Naive thymus-derived CD4-positive, alpha-beta T cell (primary cell): ENCODE measurements at regions of chr12 and their contacts with region 1.

Region 1: GRCh38 chr12:119988782-119989668 is at the start of gene BICDL1:
- DNase-seq: peak; percentile 95 to 99 (median 98)
- ATAC-seq: peak; percentile 93
- H3K4me3 ChIP-seq: peak within 1 kb of the TSS; percentile 68
- H3K4me3 Mint-ChIP-seq: peak within 1 kb of the TSS; percentile 78 to 95 (median 87)
- H3K27ac ChIP-seq: peak within 1 kb of the TSS; percentile 90
- H3K27ac Mint-ChIP-seq: peak within 1 kb of the TSS; percentile 69 to 98 (median 93)
- H3K4me1 ChIP-seq: peaks cover 18 to 19% of the 10 kb centered on the region in 2 donors
- H3K4me1 Mint-ChIP-seq: peaks cover 18 to 46% (median 38%) of the 10 kb centered on the region in 7 donors
- H3K27me3 ChIP-seq: no peaks in the 10 kb centered on the region
- H3K27me3 Mint-ChIP-seq: peaks cover 0 to 9% (median 0%) of the 10 kb centered on the region in 5 donors
- total RNA-seq, gene BICDL1: 75.8 to 156 (median 143) TPM

Region 2: GRCh38 chr12:119667577-119668323 is 321.3 kb before region 1 on chr12 and contains the start of gene PRKAB1:
- CTCF ChIA-PET with region 1: no interaction called
- POLR2A ChIA-PET with region 1: no interaction called
- intact Hi-C with region 1: loop called in 1 of 2 experiments (anchors 2 kb)
- DNase-seq: peak; percentile 91 to 96 (median 93)
- ATAC-seq: peak; percentile 96
- H3K4me3 ChIP-seq: peak within 1 kb of the TSS; percentile 81
- H3K4me3 Mint-ChIP-seq: peak within 1 kb of the TSS; percentile 85 to 98 (median 88)
- H3K27ac ChIP-seq: peak within 1 kb of the TSS; percentile 76
- H3K27ac Mint-ChIP-seq: peak within 1 kb of the TSS; percentile 77 to 96 (median 92)
- H3K4me1 ChIP-seq: peaks cover 20 to 30% of the 10 kb centered on the region in 2 donors
- H3K4me1 Mint-ChIP-seq: peaks cover 27 to 63% (median 55%) of the 10 kb centered on the region in 7 donors
- H3K27me3 ChIP-seq: no peaks in the 10 kb centered on the region
- H3K27me3 Mint-ChIP-seq: no peaks in the 10 kb centered on the region
- total RNA-seq, gene PRKAB1: 23.5 to 48.7 (median 43.3) TPM

Region 3: DNA sequence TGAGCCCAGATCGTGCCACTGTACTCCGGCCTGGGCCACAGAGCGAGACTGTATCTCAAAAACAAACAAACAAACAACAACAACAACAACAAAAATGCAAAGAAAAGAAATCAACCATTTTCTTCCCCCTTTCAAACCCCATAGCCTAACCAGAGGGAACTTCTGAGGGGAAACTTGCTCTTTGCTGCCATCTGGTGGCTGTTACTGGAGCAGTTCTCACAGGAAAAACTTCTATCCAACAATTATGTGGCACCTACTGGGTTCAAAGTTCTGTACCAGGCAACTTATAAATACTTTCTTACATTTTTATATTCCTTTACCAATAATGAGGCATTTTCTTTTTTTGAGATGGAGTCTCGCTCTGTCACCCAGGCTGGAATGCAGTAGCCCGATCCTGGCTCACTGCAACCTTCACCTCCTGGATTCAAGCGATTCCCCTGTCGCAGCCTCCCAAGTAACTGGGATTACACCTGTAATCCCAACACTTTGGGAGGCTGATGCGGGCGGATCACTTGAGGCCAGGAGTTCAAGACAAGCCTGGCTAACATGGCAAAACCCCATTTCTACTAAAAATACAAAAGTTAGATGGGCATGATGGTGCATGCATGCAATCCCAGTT is 50.9 kb before region 1 on chr12:
- CTCF ChIA-PET with region 1: no interaction called
- POLR2A ChIA-PET with region 1: no interaction called
- intact Hi-C with region 1: loop called in 1 of 2 experiments (anchors 1 kb)
- DNase-seq: peak; percentile 28 to 67 (median 51)
- ATAC-seq: peak; percentile 89
- H3K4me3 ChIP-seq: no peak overlapping the region
- H3K4me3 Mint-ChIP-seq: no peak overlapping the region
- H3K27ac ChIP-seq: no peak overlapping the region
- H3K27ac Mint-ChIP-seq: no peak overlapping the region
- H3K4me1 ChIP-seq: no peaks in the 10 kb centered on the region
- H3K4me1 Mint-ChIP-seq: no peaks in the 10 kb centered on the region
- H3K27me3 ChIP-seq: no peaks in the 10 kb centered on the region
- H3K27me3 Mint-ChIP-seq: peaks cover 0 to 7% (median 0%) of the 10 kb centered on the region in 5 donors

Region 4: DNA sequence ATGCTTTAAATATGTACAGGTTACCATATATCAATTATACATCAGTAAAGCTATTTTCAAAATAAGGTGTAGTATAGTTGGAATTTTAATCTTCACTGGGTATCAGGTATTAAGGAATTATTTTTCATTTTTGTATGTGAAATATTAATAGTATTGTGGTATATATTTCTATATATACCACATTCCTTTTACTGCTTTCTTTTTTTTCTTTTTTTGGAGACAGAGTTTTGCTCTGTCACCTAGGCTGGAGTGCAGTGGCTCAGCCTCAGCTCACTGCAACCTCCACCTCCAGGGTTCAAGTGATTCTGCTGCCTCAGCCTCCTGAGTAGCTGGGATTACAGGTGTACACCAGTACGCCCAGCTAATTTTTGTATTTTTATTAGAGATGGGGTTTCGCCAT is 36.6 kb after region 1 on chr12:
- CTCF ChIA-PET with region 1: no interaction called
- POLR2A ChIA-PET with region 1: interaction called, 4 read pairs
- intact Hi-C with region 1: loop called in 1 of 2 experiments (anchors 5 kb)
- DNase-seq: no peak
- ATAC-seq: no peak
- H3K4me3 ChIP-seq: no peak overlapping the region
- H3K4me3 Mint-ChIP-seq: no peak overlapping the region
- H3K27ac ChIP-seq: no peak overlapping the region
- H3K27ac Mint-ChIP-seq: no peak overlapping the region
- H3K4me1 ChIP-seq: no peaks in the 10 kb centered on the region
- H3K4me1 Mint-ChIP-seq: peaks cover 0 to 8% (median 0%) of the 10 kb centered on the region in 7 donors
- H3K27me3 ChIP-seq: no peaks in the 10 kb centered on the region
- H3K27me3 Mint-ChIP-seq: no peaks in the 10 kb centered on the region

Region 5: DNA sequence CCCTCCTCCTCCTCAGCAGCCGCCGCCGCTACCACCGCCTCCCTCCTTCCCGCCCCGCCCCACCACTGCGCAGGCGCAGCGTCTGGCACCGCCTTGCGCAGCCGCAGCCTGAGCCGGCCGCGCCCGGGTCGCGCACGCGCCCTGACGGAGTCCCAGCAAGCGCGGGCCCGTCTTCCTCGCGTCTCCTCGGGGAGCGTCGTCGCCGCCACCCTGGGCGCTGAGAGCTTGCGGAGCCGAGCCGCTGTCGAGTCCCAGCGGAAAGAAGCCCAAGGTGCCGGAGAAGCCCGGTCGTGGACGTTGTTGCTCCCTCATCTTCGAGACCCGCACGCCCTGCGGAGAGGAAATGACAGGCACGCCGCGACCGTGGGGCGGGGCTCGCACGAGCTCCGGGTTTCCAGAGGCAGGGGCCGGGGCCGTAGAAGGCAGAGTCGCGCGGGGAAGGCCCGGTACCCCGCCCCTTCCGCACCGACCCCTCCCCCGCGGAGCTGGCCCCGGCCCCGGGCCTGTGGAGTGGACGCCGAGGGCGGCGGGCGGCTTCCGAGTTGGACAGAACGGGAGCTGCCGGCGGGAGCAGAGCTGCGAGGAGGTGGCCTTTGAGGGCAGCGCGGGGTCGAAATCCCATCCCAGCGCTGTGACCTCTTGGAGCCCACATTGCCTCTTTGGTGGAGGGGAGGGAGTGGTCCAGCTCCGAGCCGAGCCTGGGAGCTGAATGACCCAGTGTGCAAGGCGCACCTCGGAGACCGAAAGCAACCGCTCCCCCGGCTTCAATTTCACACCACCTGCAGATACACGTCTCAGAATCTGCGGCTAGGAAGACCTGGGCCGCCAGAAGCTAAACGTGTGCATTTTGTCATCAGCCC is 128.0 kb after region 1 on chr12:
- CTCF ChIA-PET with region 1: interaction called, 3 read pairs
- POLR2A ChIA-PET with region 1: interaction called, 9 read pairs
- intact Hi-C with region 1: loop called (anchors 1 kb)
- DNase-seq: peak; percentile 95 to 100 (median 98)
- ATAC-seq: peak; percentile 91
- H3K4me3 ChIP-seq: peak overlapping the region; percentile 82
- H3K4me3 Mint-ChIP-seq: peak overlapping the region; percentile 78 to 95 (median 90)
- H3K27ac ChIP-seq: peak overlapping the region; percentile 84
- H3K27ac Mint-ChIP-seq: peak overlapping the region; percentile 80 to 97 (median 90)
- H3K4me1 ChIP-seq: peaks cover 46 to 48% of the 10 kb centered on the region in 2 donors
- H3K4me1 Mint-ChIP-seq: peaks cover 64 to 86% (median 80%) of the 10 kb centered on the region in 7 donors
- H3K27me3 ChIP-seq: no peaks in the 10 kb centered on the region
- H3K27me3 Mint-ChIP-seq: no peaks in the 10 kb centered on the region

Region 6: DNA sequence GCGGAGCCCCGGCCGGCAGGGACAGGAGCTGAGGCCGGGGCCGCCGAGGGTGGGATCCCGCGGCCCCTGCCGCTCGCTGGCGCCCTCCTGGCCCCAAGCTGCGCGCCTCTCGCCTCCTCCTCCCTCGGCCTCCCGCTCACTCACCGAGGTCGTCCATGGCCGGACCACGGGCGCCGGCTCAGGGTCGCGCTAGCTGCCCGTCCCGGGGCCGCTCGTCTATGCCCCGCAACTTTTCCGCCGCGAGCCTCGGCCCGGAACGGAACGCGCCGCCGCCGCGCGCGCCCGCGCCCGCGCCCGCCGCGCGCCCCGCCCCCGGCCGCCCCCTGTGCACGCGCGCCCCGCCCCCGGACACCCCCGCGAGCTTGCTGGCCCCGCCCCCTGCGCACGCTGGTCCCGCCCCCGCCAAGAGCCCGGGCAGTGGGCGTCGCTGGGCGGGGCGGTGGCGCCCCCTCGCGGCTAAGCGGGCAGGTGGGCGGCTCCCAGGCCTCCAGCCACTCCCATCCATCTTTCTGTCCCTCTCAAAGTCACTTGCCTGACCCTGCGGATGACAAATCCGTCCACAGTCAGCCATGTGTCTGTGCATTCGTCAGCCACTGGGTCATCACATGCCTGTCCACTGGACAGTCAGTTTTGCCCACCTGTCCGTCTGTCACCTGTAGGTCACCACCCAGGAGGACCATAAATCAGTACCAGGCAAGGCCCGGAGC is 276.6 kb after region 1 on chr12 and contains the start of gene PXN:
- CTCF ChIA-PET with region 1: no interaction called
- POLR2A ChIA-PET with region 1: no interaction called
- intact Hi-C with region 1: loop called in 1 of 2 experiments (anchors 2 kb)
- DNase-seq: peak; percentile 83 to 98 (median 91)
- ATAC-seq: peak; percentile 99
- H3K4me3 ChIP-seq: peak within 1 kb of the TSS; percentile 76
- H3K4me3 Mint-ChIP-seq: peak within 1 kb of the TSS; percentile 89 to 100 (median 93)
- H3K27ac ChIP-seq: peak within 1 kb of the TSS; percentile 91
- H3K27ac Mint-ChIP-seq: peak within 1 kb of the TSS; percentile 86 to 97 (median 93)
- H3K4me1 ChIP-seq: peaks cover 29 to 40% of the 10 kb centered on the region in 2 donors
- H3K4me1 Mint-ChIP-seq: peaks cover 17 to 46% (median 33%) of the 10 kb centered on the region in 7 donors
- H3K27me3 ChIP-seq: no peaks in the 10 kb centered on the region
- H3K27me3 Mint-ChIP-seq: no peaks in the 10 kb centered on the region
- total RNA-seq, gene PXN: 103 to 202 (median 158) TPM

Region 7: GRCh38 chr12:121038861-121039666 is 1050.0 kb after region 1 on chr12 and contains the start of gene OASL:
- CTCF ChIA-PET with region 1: no interaction called
- POLR2A ChIA-PET with region 1: no interaction called
- intact Hi-C with region 1: no loop called
- DNase-seq: peak; percentile 31 to 50 (median 43)
- ATAC-seq: peak; percentile 84
- H3K4me3 ChIP-seq: peak within 1 kb of the TSS; percentile 70
- H3K4me3 Mint-ChIP-seq: peak within 1 kb of the TSS; percentile 89 to 99 (median 96)
- H3K27ac ChIP-seq: peak within 1 kb of the TSS; percentile 68
- H3K27ac Mint-ChIP-seq: peak within 1 kb of the TSS; percentile 91 to 98 (median 95)
- H3K4me1 ChIP-seq: peaks cover 42 to 43% of the 10 kb centered on the region in 2 donors
- H3K4me1 Mint-ChIP-seq: peaks cover 27 to 49% (median 42%) of the 10 kb centered on the region in 7 donors
- H3K27me3 ChIP-seq: no peaks in the 10 kb centered on the region
- H3K27me3 Mint-ChIP-seq: peaks cover 0 to 18% (median 0%) of the 10 kb centered on the region in 5 donors
- total RNA-seq, gene OASL: 2.7 to 19.4 (median 4.3) TPM